IMR-90 (cell line): ENCODE measurements at regions of chr12 and their contacts with region 1.

Region 1: DNA sequence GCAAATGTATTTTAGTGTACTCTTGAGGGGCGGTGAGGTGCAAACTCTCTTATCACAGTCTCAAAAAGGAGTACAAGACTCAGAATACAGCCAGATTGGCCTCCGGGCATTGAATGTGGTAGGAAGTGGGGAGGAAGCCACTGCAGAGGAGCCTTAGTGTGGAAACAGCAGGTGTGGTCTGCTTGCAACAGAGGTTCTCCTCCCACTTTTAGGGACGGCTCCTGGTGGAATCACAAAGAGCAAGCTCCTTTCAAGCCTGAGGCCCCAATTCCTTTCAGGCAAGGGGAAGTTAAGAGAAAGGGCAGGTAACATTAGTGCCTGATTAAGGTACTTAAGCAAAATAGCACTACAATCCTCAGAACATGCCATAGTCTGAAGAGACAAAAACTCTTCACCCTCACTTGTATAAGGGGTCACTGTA is 23.7 kb upstream of the SLC2A3 start:
- DNase-seq: no peak
- ATAC-seq: no peak
- H3K4me3 ChIP-seq: no peak overlapping the region
- H3K27ac ChIP-seq: no peak overlapping the region; the same call in 1 of the 2 replicates
- H3K4me1 ChIP-seq: peaks cover 14% of the 10 kb centered on the region
- H3K27me3 ChIP-seq: no peaks in the 10 kb centered on the region
- CTCF ChIP-seq: no peak
- POLR2A ChIP-seq: no peak
- RAD21 ChIP-seq: no peak

Region 2: DNA sequence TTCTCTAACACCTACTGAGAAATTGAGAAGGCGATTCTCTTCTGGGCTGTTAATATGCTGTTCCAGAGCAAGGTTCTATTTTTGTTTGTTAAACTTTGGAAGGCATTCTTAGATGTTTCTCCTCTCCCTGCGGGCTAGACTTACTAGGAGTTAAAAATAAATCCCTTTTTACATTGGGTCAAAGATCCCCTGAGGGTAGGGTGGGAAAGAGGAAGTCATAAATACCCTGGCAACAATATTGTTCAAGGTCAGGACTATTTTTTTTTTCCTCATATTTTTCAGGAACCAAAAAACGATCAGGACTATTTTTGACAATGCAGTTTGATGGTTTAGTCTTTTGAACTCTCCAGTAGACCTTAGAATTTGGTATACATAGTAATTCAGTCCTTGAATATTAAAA is 75.0 kb before region 1 on chr12:
- CTCF ChIA-PET with region 1: no interaction called
- POLR2A ChIA-PET with region 1: no interaction called
- dilution Hi-C with region 1: no loop called
- in situ Hi-C with region 1: no loop called
- intact Hi-C with region 1: no loop called
- DNase-seq: no peak
- ATAC-seq: no peak
- H3K4me3 ChIP-seq: no peak overlapping the region
- H3K27ac ChIP-seq: no peak overlapping the region
- H3K4me1 ChIP-seq: no peaks in the 10 kb centered on the region
- H3K27me3 ChIP-seq: no peaks in the 10 kb centered on the region
- CTCF ChIP-seq: no peak
- POLR2A ChIP-seq: no peak
- RAD21 ChIP-seq: no peak

Region 3: GRCh38 chr12:7915559-7916403 is 43.9 kb before region 1 on chr12:
- CTCF ChIA-PET with region 1: no interaction called
- POLR2A ChIA-PET with region 1: no interaction called
- dilution Hi-C with region 1: no loop called
- in situ Hi-C with region 1: no loop called
- intact Hi-C with region 1: no loop called
- DNase-seq: no peak
- ATAC-seq: peak; percentile 54
- H3K4me3 ChIP-seq: peak overlapping the region; percentile 26; the same call in 1 of the 2 replicates
- H3K27ac ChIP-seq: no peak overlapping the region
- H3K4me1 ChIP-seq: peaks cover 2% of the 10 kb centered on the region; the same call in 1 of the 2 replicates
- H3K27me3 ChIP-seq: no peaks in the 10 kb centered on the region
- CTCF ChIP-seq: no peak
- POLR2A ChIP-seq: no peak
- RAD21 ChIP-seq: no peak

Region 4: DNA sequence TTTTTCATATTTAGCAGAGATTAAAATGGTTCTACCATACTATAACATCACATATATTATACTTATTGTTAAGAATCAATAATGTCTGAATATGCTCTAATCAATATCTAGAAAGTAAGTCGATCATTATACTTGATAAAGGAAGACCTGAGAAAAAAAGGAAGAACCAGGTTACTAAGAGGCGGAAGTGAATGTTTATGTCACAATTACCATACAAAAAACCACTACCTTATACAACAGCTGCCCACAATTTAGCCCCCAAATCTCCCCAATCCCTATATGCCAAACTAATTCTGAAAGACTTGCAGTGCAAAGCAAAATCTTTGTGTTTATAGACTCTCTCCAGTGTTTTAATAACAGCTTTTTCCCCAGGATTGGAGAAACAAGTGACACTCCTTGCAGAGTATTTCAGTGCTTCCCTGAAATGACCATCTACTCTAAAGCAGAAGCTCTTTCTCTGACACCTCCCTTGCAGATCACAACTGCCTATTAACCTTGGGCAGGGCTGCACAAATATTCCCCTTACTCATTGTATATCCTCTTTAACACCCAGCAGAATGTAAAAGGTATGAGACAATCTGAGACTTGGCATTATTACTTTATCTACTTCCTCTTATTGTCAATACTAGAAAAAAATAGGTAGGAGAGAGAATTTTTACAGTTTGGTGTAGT is 11.0 kb before region 1 on chr12:
- CTCF ChIA-PET with region 1: interaction called, 4 read pairs
- POLR2A ChIA-PET with region 1: no interaction called
- dilution Hi-C with region 1: no loop called
- in situ Hi-C with region 1: no loop called
- intact Hi-C with region 1: loop called (anchors 1 kb)
- DNase-seq: no peak
- ATAC-seq: no peak
- H3K4me3 ChIP-seq: no peak overlapping the region
- H3K27ac ChIP-seq: no peak overlapping the region
- H3K4me1 ChIP-seq: no peaks in the 10 kb centered on the region
- H3K27me3 ChIP-seq: no peaks in the 10 kb centered on the region
- CTCF ChIP-seq: no peak
- POLR2A ChIP-seq: no peak
- RAD21 ChIP-seq: no peak